Panc1 (cell line): ENCODE measurements at regions of chr10 and their contacts with region 1.

Region 1: DNA sequence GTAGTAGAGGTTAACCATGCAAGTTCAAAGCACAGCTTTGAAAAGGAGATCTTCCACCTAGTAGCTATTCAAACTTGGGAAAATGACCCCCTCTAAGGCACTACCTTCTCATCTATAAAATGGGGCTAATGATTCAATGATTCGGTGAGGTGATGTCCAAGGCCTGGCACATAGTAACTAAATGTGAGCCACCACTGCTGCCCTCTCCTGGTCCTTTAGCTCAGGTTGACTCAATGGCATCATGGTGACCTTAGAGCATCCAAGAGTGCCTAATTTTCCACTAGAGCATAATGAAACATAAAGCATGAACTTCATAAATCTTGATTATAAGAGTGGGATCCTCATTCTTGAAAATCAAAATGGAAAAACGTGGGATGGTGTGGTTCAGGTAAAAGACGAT is 16.3 kb upstream of the PLCE1 start:
- DNase-seq: no peak
- ATAC-seq: no peak
- H3K4me3 ChIP-seq: no peak overlapping the region
- H3K27ac ChIP-seq: no peak overlapping the region
- H3K4me1 ChIP-seq: no peaks in the 10 kb centered on the region
- H3K27me3 ChIP-seq: no peaks in the 10 kb centered on the region
- CTCF ChIP-seq: peak; percentile 54

Region 2: DNA sequence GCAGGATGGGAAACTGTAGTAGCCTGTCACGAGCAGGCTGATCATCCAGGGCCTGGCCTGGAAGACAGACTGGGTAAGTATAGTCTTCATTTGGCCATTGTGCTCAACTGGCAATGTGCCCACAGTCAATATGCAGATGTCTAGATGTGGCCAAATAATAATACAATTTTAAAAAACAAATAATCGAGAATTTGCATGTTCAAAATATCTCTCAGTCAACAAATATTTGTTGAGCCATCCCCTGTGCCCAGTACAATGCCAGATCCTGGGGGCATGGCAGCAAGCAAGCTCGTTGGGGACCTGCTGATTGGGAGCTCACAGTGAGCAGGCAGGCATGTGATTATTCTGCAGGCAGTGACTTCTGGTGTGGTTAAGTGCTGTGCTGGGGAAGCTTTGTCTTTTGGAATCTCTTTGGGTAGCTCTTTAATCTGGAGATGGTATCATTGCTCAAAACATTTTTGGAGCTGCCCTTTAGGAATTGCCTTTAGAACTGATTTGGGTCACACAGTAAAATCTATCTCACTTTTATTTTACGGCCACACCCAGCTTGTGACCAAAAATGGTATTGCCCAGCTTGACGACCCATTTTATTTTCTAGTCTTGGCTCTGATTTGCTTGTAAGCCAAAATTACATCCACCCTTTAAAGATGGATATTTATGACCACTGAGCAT is 108.5 kb after region 1 on chr10:
- CTCF ChIA-PET with region 1: no interaction called
- POLR2A ChIA-PET with region 1: no interaction called
- in situ Hi-C with region 1: no loop called
- intact Hi-C with region 1: no loop called
- DNase-seq: no peak
- ATAC-seq: peak; percentile 28; the same call in 1 of the 2 replicates
- H3K4me3 ChIP-seq: no peak overlapping the region
- H3K27ac ChIP-seq: peak overlapping the region; percentile 24
- H3K4me1 ChIP-seq: peaks cover 68% of the 10 kb centered on the region
- H3K27me3 ChIP-seq: no peaks in the 10 kb centered on the region
- CTCF ChIP-seq: no peak

Region 3: GRCh38 chr10:94423627-94424026 is 446.2 kb after region 1 on chr10:
- CTCF ChIA-PET with region 1: no interaction called
- POLR2A ChIA-PET with region 1: interaction called, 15 read pairs
- in situ Hi-C with region 1: no loop called
- intact Hi-C with region 1: no loop called
- DNase-seq: no peak
- ATAC-seq: no peak
- H3K4me3 ChIP-seq: no peak overlapping the region
- H3K27ac ChIP-seq: no peak overlapping the region
- H3K4me1 ChIP-seq: no peaks in the 10 kb centered on the region; the same call in 1 of the 2 replicates
- H3K27me3 ChIP-seq: no peaks in the 10 kb centered on the region
- CTCF ChIP-seq: no peak